Caco-2 (cell line): ENCODE measurements at regions of chr20 and their contacts with region 1.

Region 1: GRCh38 chr20:59087829-59088433 is 45.3 kb upstream of the PRELID3B start:
- DNase-seq: peak; percentile 86 to 93
- H3K4me3 ChIP-seq: no peak overlapping the region
- H3K4me3 Mint-ChIP-seq: no peak overlapping the region
- H3K27ac Mint-ChIP-seq: no peak overlapping the region
- H3K4me1 ChIP-seq: peaks cover under 1% of the 10 kb centered on the region; the same call in 1 of the 2 replicates
- H3K4me1 Mint-ChIP-seq: no peaks in the 10 kb centered on the region
- H3K27me3 ChIP-seq: 0 out of 2 replicates have a peak, but pooled peaks cover 1% of the 10 kb centered on the region
- H3K27me3 Mint-ChIP-seq: peaks cover 31% of the 10 kb centered on the region
- CTCF ChIP-seq: peak; percentile 99

Region 2: DNA sequence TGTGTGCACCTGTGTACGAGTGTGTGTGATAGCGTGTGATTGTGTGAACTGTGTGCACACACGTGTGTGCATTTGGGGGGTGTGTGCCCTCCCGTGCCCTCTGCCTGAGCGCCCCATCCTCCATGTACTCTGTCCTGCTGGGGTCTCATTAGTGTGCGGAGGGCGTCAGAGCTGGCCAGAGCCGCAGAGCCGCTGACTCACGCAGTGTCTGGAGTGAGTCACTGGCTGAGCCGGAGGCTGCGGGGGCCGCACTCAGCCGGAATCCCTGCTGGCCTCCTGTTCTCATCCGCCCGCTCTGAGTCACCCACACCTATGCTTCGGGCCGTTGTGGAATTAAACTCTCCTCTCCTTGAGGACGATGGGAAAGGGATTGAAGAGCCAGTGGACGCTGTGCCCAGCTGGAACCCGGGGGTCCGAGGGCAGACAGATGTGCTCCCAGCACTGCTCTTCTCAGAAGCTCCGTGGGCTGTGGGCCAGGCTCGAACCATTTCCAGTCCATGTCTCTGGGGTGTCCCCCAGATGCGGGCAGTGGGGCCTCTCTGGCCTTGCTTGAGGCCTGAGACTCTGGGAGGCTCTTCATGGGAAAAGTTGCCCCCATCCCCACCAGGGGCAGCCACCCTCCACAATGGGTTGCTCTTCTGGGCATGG is 464.0 kb before region 1 on chr20:
- CTCF ChIA-PET with region 1: no interaction called
- POLR2A ChIA-PET with region 1: no interaction called
- intact Hi-C with region 1: no loop called
- DNase-seq: peak; percentile 30 to 74
- H3K4me3 ChIP-seq: no peak overlapping the region
- H3K4me3 Mint-ChIP-seq: no peak overlapping the region
- H3K27ac Mint-ChIP-seq: no peak overlapping the region
- H3K4me1 ChIP-seq: no peaks in the 10 kb centered on the region; the same call in 1 of the 2 replicates
- H3K4me1 Mint-ChIP-seq: no peaks in the 10 kb centered on the region
- H3K27me3 ChIP-seq: no peaks in the 10 kb centered on the region
- H3K27me3 Mint-ChIP-seq: peaks cover 3% of the 10 kb centered on the region
- CTCF ChIP-seq: no peak

Region 3: DNA sequence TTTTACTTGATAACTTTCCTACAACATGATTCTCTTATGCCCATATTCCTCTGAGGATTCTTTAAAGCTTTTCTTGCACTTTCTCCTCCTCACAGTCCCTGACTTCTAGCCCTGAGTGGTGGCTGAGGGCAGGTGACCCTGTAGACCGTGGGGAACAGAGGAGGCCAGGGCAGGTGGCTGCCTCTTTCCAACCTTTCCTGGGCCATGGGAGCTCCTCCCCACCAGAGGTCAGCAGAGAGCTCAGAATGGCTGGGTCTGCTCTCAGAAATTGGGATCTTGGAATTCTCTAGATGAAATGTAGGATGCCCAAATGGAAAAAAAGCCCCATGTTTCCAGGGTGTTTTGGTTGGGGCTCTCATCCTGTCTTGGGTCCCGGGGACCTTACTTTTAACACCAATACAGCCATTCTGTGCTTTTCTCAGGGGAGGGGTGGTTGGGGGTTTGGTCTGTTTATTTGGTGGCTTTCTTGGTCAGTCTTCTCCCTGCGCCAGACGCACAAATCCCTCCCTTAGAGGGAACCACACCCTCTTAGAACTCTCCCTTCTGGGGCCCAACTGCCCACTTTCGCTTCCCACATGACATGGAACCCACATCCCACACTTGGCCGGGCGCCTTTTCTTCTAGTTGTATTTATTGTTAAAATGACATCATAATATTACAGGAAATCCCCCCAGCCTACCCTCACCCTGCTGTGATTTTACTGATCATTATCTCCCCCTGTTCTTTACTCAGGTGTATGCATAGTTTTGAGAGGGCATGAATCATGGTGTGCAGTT is 217.5 kb before region 1 on chr20:
- CTCF ChIA-PET with region 1: interaction called, 12 read pairs
- POLR2A ChIA-PET with region 1: no interaction called
- intact Hi-C with region 1: loop called (anchors 5 kb)
- DNase-seq: peak; percentile 83 to 93
- H3K4me3 ChIP-seq: no peak overlapping the region
- H3K4me3 Mint-ChIP-seq: no peak overlapping the region
- H3K27ac Mint-ChIP-seq: no peak overlapping the region
- H3K4me1 ChIP-seq: no peaks in the 10 kb centered on the region
- H3K4me1 Mint-ChIP-seq: peaks cover 6% of the 10 kb centered on the region
- H3K27me3 ChIP-seq: no peaks in the 10 kb centered on the region
- H3K27me3 Mint-ChIP-seq: peaks cover 17% of the 10 kb centered on the region
- CTCF ChIP-seq: peak; percentile 98 to 100

Region 4: DNA sequence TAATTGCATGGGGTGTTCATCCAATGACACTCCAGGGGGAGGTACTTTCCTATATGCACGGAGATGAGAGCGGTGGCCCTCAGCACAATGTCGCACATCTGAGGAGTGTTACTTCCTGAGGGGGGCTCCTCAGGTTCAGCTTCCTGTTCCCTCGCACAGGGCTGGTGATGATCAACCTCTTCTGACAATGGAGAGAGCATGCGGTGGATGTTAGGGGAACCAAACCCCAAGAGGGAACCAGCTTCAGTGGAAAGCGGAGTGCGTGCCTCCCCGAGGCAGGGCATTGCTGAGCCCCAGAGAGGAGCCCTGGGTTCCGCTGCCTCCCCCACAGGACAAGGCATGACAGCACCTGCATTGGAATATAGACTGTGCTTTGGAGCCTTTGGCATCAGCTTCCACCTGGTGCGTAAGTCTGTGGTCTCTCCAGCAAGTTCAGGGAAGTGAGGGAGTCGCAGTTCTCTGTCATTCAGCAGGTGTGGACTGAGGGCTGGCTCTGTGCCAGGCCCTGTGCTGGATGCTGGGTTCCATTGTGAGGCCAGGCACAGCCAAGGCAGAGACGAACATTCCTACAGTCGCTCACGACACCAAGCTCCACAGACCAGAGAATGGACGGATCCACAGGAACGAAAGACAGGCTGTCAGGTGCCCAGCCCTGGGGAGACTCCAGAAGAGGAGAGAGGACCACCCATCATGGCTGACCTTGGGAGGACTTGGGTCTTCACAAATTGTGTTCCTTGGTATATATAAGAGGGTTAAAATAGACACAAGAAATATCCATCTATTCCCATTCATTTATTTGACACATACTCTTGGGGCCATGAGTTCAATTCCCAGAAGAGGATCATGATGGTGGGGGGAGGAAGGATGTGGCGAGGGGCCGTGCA is 71.8 kb after region 1 on chr20:
- CTCF ChIA-PET with region 1: no interaction called
- POLR2A ChIA-PET with region 1: no interaction called
- intact Hi-C with region 1: loop called (anchors 2 kb)
- DNase-seq: no peak
- H3K4me3 ChIP-seq: no peak overlapping the region
- H3K4me3 Mint-ChIP-seq: no peak overlapping the region
- H3K27ac Mint-ChIP-seq: no peak overlapping the region
- H3K4me1 ChIP-seq: peaks cover 4% of the 10 kb centered on the region; the same call in 1 of the 2 replicates
- H3K4me1 Mint-ChIP-seq: peaks cover 3% of the 10 kb centered on the region
- H3K27me3 ChIP-seq: no peaks in the 10 kb centered on the region; the same call in 1 of the 2 replicates
- H3K27me3 Mint-ChIP-seq: peaks cover 32% of the 10 kb centered on the region
- CTCF ChIP-seq: no peak

Region 5: GRCh38 chr20:59207742-59208357 is 119.9 kb after region 1 on chr20:
- CTCF ChIA-PET with region 1: interaction called, 10 read pairs
- POLR2A ChIA-PET with region 1: no interaction called
- intact Hi-C with region 1: no loop called
- DNase-seq: peak; percentile 63 to 69
- H3K4me3 ChIP-seq: no peak overlapping the region
- H3K4me3 Mint-ChIP-seq: no peak overlapping the region
- H3K27ac Mint-ChIP-seq: no peak overlapping the region
- H3K4me1 ChIP-seq: no peaks in the 10 kb centered on the region
- H3K4me1 Mint-ChIP-seq: no peaks in the 10 kb centered on the region
- H3K27me3 ChIP-seq: 0 out of 2 replicates have a peak, but pooled peaks cover 1% of the 10 kb centered on the region
- H3K27me3 Mint-ChIP-seq: peaks cover 34% of the 10 kb centered on the region
- CTCF ChIP-seq: peak; percentile 58 to 65

Region 6: DNA sequence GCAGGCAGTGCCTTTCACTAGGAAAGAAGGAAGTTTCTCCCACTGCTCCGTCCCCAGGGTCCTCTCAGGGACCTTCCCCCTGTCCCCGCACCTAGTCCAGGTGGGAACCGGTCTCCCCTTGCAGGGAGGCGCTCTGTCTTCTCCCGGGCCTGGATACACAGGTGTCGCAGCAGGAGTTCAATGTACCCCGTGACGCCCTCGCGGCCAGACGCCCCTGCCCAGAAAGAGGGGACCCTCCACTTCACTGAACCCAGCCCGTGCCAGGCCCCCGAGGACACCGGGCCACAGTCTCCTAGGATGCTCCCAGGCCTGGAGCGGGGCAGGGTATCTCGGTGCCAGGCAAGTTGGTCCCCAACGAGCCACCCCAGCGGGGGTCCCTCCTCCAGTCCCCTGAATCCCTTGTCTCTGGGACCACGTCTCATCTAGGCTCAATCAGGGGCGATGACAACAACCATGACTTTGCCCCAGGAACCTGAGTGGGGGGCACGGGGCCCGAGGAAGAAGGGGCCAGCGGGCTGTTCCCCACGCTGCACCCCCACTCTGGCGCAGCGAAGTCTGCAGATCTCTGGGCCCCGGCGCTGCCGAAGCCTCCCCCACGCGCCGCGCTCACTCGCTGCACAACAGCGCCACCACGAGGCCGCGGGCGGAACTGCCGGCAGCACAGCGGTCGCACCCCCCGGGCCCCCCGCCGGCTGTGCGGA is 315.5 kb after region 1 on chr20:
- CTCF ChIA-PET with region 1: interaction called, 23 read pairs
- POLR2A ChIA-PET with region 1: no interaction called
- intact Hi-C with region 1: loop called (anchors 1 kb)
- DNase-seq: peak in 1 of 2 experiments; percentile 92
- H3K4me3 ChIP-seq: no peak overlapping the region; the same call in 1 of the 2 replicates
- H3K4me3 Mint-ChIP-seq: peak overlapping the region; percentile 13
- H3K27ac Mint-ChIP-seq: no peak overlapping the region
- H3K4me1 ChIP-seq: peaks cover 20% of the 10 kb centered on the region
- H3K4me1 Mint-ChIP-seq: no peaks in the 10 kb centered on the region
- H3K27me3 ChIP-seq: no peaks in the 10 kb centered on the region; the same call in 1 of the 2 replicates
- H3K27me3 Mint-ChIP-seq: peaks cover 19% of the 10 kb centered on the region
- CTCF ChIP-seq: peak; percentile 99 to 100

Region 7: GRCh38 chr20:59455402-59456341 is 367.7 kb after region 1 on chr20:
- CTCF ChIA-PET with region 1: interaction called, 17 read pairs
- POLR2A ChIA-PET with region 1: no interaction called
- intact Hi-C with region 1: loop called (anchors 1 kb)
- DNase-seq: peak in 1 of 2 experiments; percentile 52
- H3K4me3 ChIP-seq: no peak overlapping the region
- H3K4me3 Mint-ChIP-seq: no peak overlapping the region
- H3K27ac Mint-ChIP-seq: no peak overlapping the region
- H3K4me1 ChIP-seq: peaks cover 10% of the 10 kb centered on the region; the same call in 1 of the 2 replicates
- H3K4me1 Mint-ChIP-seq: no peaks in the 10 kb centered on the region
- H3K27me3 ChIP-seq: no peaks in the 10 kb centered on the region
- H3K27me3 Mint-ChIP-seq: peaks cover 17% of the 10 kb centered on the region
- CTCF ChIP-seq: peak; percentile 86 to 91

Region 8: DNA sequence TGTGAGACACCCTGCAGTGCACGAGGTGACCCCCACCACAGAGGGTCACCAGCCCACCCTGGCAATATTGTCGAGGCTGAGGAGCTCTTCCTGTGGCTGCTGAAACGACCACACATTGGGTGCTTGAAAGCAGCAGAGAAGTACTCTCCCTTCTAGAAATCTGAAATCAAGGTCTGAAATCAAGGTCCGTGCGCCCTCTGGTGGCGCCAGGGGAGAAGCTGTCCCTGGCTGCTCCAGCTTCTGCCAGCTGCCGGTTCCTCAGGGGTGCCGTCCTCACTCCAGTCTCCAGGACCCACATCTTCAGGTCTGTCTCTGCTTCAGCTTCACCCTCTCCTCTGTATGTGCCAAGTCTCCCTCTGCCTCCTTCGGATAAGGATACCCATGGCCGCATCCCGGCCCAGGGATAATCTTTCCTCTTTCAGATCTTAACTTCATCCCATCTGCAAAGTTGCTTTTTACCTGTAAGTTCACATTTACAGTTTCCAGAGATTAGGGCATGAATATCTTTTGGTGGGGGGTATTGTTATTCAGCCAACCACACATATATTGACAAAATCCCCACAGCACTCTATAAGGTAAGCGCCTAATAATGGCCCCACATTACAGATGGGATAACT is 408.1 kb after region 1 on chr20:
- CTCF ChIA-PET with region 1: interaction called, 4 read pairs
- POLR2A ChIA-PET with region 1: no interaction called
- intact Hi-C with region 1: loop called (anchors 5 kb)
- DNase-seq: peak; percentile 83 to 88
- H3K4me3 ChIP-seq: no peak overlapping the region
- H3K4me3 Mint-ChIP-seq: no peak overlapping the region
- H3K27ac Mint-ChIP-seq: no peak overlapping the region
- H3K4me1 ChIP-seq: no peaks in the 10 kb centered on the region
- H3K4me1 Mint-ChIP-seq: no peaks in the 10 kb centered on the region
- H3K27me3 ChIP-seq: peaks cover 5% of the 10 kb centered on the region; the same call in 1 of the 2 replicates
- H3K27me3 Mint-ChIP-seq: peaks cover 38% of the 10 kb centered on the region
- CTCF ChIP-seq: peak; percentile 98 to 99